Activated CD8-positive, alpha-beta T cell treated with anti-CD3 and anti-CD28 coated beads for 36 hours (primary cell): ENCODE measurements at regions of chr2 and their contacts with region 1.

Region 1: DNA sequence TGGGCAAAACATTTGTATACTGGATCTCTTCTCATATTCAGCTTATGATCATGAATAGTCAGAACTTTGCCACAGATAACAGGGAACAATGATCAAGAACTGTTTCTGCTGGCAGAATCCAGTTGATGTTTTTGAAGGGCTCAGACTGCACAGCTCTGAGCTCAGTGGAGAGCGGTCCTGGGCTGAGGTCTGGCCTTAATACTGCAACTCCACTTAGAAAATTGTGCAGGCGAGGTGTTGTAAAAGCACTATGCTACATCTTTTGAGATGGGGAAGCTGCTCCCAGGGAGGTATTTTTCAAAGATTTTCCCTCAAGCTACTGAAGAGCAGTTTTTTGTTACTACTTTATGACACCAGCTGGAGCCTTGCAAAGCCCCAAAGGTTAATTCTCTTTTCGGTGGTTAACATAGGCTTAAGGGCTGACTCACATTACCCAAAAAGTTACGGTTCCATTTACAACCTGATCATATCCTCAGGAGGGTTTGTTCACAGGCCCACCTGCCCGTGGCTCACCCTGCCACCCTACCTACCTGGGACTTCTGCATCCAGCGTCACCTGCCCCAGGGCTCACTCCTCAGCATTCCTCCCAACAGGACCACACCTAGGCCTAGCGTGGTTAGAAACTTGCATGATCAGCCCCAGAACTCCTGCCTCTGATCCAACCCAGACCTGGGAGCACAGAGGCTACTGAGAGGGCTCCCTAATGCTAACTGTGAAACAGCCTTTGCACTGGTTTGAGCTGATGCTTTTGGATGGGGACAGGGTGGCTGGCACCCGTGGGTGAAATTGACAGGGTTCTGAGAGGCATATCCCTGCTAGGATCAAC is 114.4 kb downstream of the NCK2 start:
- DNase-seq: peak; percentile 62
- ATAC-seq: peak; percentile 64
- H3K4me3 Mint-ChIP-seq: peak overlapping the region; percentile 27
- H3K27ac Mint-ChIP-seq: peak overlapping the region; percentile 92
- H3K4me1 Mint-ChIP-seq: peaks cover 93% of the 10 kb centered on the region
- H3K27me3 Mint-ChIP-seq: no peaks in the 10 kb centered on the region
- CTCF ChIP-seq: no peak

Region 2: GRCh38 chr2:105802587-105802986 is 56.5 kb before region 1 on chr2:
- CTCF ChIA-PET with region 1: interaction called, 11 read pairs
- POLR2A ChIA-PET with region 1: interaction called, 11 read pairs
- intact Hi-C with region 1: loop called (anchors 5 kb)
- DNase-seq: peak; percentile 84
- ATAC-seq: peak; percentile 78
- H3K4me3 Mint-ChIP-seq: peak overlapping the region; percentile 19
- H3K27ac Mint-ChIP-seq: peak overlapping the region; percentile 93
- H3K4me1 Mint-ChIP-seq: peaks cover 95% of the 10 kb centered on the region
- H3K27me3 Mint-ChIP-seq: no peaks in the 10 kb centered on the region
- CTCF ChIP-seq: no peak

Region 3: DNA sequence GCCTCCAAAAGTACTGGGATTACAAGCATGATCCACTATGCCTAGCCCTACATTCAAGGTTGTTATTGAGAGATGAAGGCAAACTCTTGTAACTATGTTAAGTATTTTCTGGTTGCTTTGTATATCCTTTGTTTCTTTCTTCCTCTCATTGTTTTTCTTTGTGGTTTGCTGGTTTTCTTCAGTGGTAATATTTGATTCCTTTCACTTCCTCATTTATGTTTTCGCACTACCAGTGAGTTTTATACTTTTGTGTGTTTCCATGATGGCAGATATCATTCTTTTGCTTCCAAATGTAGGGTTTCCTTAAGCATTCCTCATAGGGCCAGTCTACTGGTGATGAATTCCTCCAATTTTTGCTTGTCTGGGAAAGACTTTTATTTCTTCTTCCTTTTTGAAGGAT is 24.1 kb before region 1 on chr2:
- CTCF ChIA-PET with region 1: interaction called, 4 read pairs
- POLR2A ChIA-PET with region 1: interaction called, 6 read pairs
- intact Hi-C with region 1: loop called (anchors 2 kb)
- DNase-seq: no peak
- ATAC-seq: no peak
- H3K4me3 Mint-ChIP-seq: no peak overlapping the region
- H3K27ac Mint-ChIP-seq: peak overlapping the region; percentile 76
- H3K4me1 Mint-ChIP-seq: peaks cover 93% of the 10 kb centered on the region
- H3K27me3 Mint-ChIP-seq: no peaks in the 10 kb centered on the region
- CTCF ChIP-seq: no peak

Region 4: DNA sequence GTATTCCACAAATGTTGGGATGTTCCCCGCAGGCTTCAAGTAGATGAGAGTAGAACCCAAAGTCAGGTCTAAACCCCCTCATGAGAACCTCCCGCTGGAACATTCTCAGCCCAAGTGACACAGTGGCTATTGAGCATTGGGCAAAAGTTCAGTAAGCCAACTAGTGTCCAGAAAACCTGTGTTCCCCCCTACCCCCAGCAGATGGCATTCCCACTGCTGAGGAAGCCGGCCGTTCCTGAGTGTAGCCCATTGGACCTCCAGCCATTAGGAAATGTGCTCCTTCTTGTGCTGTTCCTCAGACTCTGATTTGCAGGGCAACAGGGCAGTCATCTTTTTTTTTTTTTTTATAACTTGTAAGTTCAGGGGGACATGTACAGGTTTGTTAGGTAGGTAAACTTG is 37.7 kb after region 1 on chr2:
- CTCF ChIA-PET with region 1: no interaction called
- POLR2A ChIA-PET with region 1: no interaction called
- intact Hi-C with region 1: no loop called
- DNase-seq: no peak
- ATAC-seq: no peak
- H3K4me3 Mint-ChIP-seq: no peak overlapping the region
- H3K27ac Mint-ChIP-seq: no peak overlapping the region
- H3K4me1 Mint-ChIP-seq: peaks cover 41% of the 10 kb centered on the region
- H3K27me3 Mint-ChIP-seq: no peaks in the 10 kb centered on the region
- CTCF ChIP-seq: no peak